ENCODE measurements at regions of chr1 and their contacts with region 1.

Region 1: GRCh38 chr1:200258447-200259375 is 151.1 kb downstream of the ZNF281 start:
- DNase-seq: no peak
- H3K4me3 ChIP-seq: no peak overlapping the region
- CTCF ChIP-seq: peak; percentile 40

Region 2: GRCh38 chr1:200242110-200243041 is 16.3 kb before region 1 on chr1:
- CTCF ChIA-PET with region 1: interaction called, 19 read pairs
- POLR2A ChIA-PET with region 1: no interaction called
- DNase-seq: no peak
- H3K4me3 ChIP-seq: no peak overlapping the region
- CTCF ChIP-seq: no peak

Region 3: GRCh38 chr1:200409761-200410565 is 151.3 kb after region 1 on chr1 and contains the start of gene ZNF281:
- CTCF ChIA-PET with region 1: no interaction called
- POLR2A ChIA-PET with region 1: no interaction called
- DNase-seq: peak; percentile 46
- H3K4me3 ChIP-seq: peak within 1 kb of the TSS; percentile 74
- CTCF ChIP-seq: no peak